Psoas muscle (tissue), 8 donors: ENCODE measurements at regions of chr11 and their contacts with region 1.

Region 1: GRCh38 chr11:94481342-94481741 is 12.3 kb downstream of the MRE11 start:
- DNase-seq: no peak
- ATAC-seq: no peak
- H3K4me3 ChIP-seq: no peak overlapping the region
- H3K27ac ChIP-seq: no peak overlapping the region
- H3K4me1 ChIP-seq: no peaks in the 10 kb centered on the region
- H3K27me3 ChIP-seq: no peaks in the 10 kb centered on the region
- CTCF ChIP-seq: no peak

Region 2: GRCh38 chr11:93791493-93791892 is 689.8 kb before region 1 on chr11:
- intact Hi-C with region 1: loop called in 1 of 2 experiments (anchors 10 kb)
- DNase-seq: no peak
- ATAC-seq: no peak
- H3K4me3 ChIP-seq: no peak overlapping the region
- H3K27ac ChIP-seq: no peak overlapping the region
- H3K4me1 ChIP-seq: peaks cover 14% of the 10 kb centered on the region
- H3K27me3 ChIP-seq: no peaks in the 10 kb centered on the region
- CTCF ChIP-seq: no peak